MCF 10A (cell line): ENCODE measurements at regions of chr9 and their contacts with region 1.

Region 1: GRCh38 chr9:83980395-83981125 is at the start of gene RMI1:
- DNase-seq: peak; percentile 99
- H3K4me3 Mint-ChIP-seq: peak within 1 kb of the TSS; percentile 100
- H3K27ac Mint-ChIP-seq: peak within 1 kb of the TSS; percentile 100
- H3K4me1 Mint-ChIP-seq: peaks cover 25% of the 10 kb centered on the region
- H3K27me3 Mint-ChIP-seq: no peaks in the 10 kb centered on the region
- CTCF ChIP-seq: no peak
- total RNA-seq, gene RMI1: 6.9 and 11.0 TPM in 2 replicates

Region 2: DNA sequence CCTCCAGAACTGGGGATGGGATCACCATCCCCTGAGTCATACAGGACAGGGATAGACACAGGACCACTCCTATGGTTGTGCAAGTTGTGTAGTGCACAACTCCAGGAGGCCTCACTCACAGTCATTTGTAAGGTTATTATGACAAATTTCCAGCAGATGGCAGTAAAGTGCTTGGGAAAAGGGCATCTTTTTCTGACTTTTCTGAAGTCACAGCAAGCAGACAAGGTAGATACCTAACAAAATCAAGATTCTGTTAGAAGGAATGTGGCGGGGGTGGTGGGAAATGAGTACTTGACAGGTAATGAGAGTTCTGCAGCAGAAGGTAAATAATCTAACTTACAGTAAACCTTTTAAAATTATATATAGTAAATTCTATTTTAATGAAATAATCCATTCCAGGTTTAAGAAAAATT is 42.6 kb before region 1 on chr9:
- CTCF ChIA-PET with region 1: interaction called, 3 read pairs
- POLR2A ChIA-PET with region 1: interaction called, 61 read pairs
- intact Hi-C with region 1: loop called (anchors 2 kb)
- DNase-seq: peak; percentile 83
- H3K4me3 Mint-ChIP-seq: no peak overlapping the region
- H3K27ac Mint-ChIP-seq: no peak overlapping the region
- H3K4me1 Mint-ChIP-seq: peaks cover 41% of the 10 kb centered on the region
- H3K27me3 Mint-ChIP-seq: no peaks in the 10 kb centered on the region
- CTCF ChIP-seq: peak; percentile 67

Region 3: DNA sequence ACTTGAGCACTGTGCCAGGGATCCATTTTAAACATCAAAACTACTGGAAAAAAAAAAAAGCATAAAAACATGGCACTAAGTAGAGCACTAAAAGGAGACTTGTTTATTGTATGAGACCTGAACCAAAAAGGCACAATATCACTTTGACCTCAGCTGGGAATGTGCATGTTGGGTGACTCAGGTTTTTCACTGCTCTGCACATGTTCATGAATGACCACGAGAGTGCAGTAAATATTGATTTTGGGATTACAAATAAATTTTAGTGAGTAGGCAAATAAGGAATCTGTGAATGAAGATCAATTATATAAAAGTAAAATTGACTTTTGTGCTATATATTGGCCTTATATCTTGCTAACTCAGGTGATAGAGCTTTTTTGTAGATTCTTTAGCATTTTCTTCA is 11.9 kb after region 1 on chr9:
- CTCF ChIA-PET with region 1: no interaction called
- POLR2A ChIA-PET with region 1: interaction called, 15 read pairs
- intact Hi-C with region 1: no loop called
- DNase-seq: no peak
- H3K4me3 Mint-ChIP-seq: no peak overlapping the region
- H3K27ac Mint-ChIP-seq: no peak overlapping the region
- H3K4me1 Mint-ChIP-seq: peaks cover 11% of the 10 kb centered on the region
- H3K27me3 Mint-ChIP-seq: no peaks in the 10 kb centered on the region
- CTCF ChIP-seq: peak; percentile 20

Region 4: GRCh38 chr9:84170521-84171141 is 190.1 kb after region 1 on chr9:
- CTCF ChIA-PET with region 1: interaction called, 8 read pairs
- POLR2A ChIA-PET with region 1: interaction called, 8 read pairs
- intact Hi-C with region 1: loop called (anchors 1 kb)
- DNase-seq: peak; percentile 79
- H3K4me3 Mint-ChIP-seq: no peak overlapping the region
- H3K27ac Mint-ChIP-seq: peak overlapping the region; percentile 69
- H3K4me1 Mint-ChIP-seq: peaks cover 21% of the 10 kb centered on the region
- H3K27me3 Mint-ChIP-seq: no peaks in the 10 kb centered on the region
- CTCF ChIP-seq: peak; percentile 17

Region 5: DNA sequence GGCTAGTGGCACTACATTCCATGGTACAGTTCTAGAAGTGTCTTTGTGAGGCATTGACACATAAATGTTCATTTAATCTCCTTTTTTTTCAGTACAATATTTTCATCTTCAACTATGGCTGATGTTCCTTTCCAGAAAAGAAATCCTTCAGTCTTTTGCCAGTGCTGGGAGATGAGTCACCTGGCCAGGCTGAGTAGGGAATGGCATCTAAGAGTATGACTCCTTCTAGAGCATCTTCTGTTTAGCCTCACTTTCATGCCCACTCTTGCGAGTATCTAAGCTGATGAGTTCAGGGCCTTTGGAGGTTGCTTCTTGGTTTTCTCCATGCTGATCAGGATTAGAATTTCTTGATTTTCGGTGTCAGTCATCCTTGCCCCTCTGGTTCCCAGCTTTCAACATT is 235.6 kb after region 1 on chr9:
- CTCF ChIA-PET with region 1: no interaction called
- POLR2A ChIA-PET with region 1: interaction called, 12 read pairs
- intact Hi-C with region 1: no loop called
- DNase-seq: peak; percentile 8
- H3K4me3 Mint-ChIP-seq: no peak overlapping the region
- H3K27ac Mint-ChIP-seq: no peak overlapping the region
- H3K4me1 Mint-ChIP-seq: peaks cover 6% of the 10 kb centered on the region
- H3K27me3 Mint-ChIP-seq: no peaks in the 10 kb centered on the region
- CTCF ChIP-seq: no peak

Region 6: DNA sequence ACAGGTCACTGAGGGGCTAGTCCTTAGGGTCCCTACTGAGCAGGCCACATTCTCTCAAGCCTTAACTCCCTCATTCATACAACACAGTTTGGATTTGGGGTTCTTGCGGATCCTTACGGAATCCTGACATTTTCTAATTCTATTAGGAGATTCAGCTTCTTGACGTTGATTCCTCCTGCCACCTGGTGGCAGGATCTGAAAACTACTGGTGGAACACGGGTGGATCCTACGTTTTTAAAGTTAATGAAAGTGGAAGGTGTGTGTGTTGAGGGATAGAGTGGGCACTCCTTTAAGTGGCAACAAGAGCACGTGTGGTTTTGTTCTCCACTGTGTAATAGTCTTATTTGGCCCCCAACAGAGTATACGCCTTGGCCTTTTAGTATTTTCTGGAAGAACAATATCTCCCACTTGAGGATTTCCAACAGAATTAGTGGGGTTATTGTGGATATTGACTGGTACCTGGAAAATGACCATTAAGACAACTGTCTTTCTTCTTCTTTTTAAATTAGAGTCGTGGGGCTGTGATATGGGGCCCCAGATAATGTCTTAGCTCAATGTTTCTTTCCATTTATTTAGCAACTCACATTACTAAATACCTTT is 334.8 kb after region 1 on chr9:
- CTCF ChIA-PET with region 1: interaction called, 3 read pairs
- POLR2A ChIA-PET with region 1: interaction called, 3 read pairs
- intact Hi-C with region 1: loop called (anchors 5 kb)
- DNase-seq: peak; percentile 72
- H3K4me3 Mint-ChIP-seq: no peak overlapping the region
- H3K27ac Mint-ChIP-seq: no peak overlapping the region
- H3K4me1 Mint-ChIP-seq: peaks cover 23% of the 10 kb centered on the region
- H3K27me3 Mint-ChIP-seq: no peaks in the 10 kb centered on the region
- CTCF ChIP-seq: peak; percentile 79